ENCODE measurements at regions of chr5 and their contacts with region 1.

Region 1: DNA sequence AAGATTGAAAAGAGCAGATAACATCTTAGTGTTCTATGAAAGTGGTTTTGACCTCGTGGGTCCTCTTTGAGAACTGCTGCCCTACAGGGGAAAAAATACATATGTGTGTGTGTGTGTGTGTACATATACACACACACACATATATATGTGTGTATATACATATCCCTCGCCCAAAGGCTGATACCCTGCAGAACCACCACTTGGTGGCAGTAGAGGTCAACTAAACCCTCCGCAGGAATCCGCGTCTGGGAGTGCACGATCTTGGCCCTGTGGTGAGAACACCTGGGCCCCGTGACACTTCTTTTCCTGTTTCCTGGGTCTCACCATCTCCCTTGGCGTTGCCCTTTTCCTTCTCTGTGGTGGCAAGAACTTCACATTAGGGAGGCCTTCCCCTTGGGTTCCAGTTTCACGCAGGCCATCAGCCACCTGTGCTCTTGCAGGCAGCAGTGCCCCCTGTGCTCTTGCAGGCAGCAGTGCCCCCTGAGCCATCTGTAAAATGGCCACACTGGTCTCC is 8.2 kb downstream of the IL9 start:
- DNase-seq: peak; percentile 80 to 84
- H3K4me3 ChIP-seq: no peak overlapping the region
- H3K4me3 Mint-ChIP-seq: no peak overlapping the region
- H3K27ac Mint-ChIP-seq: no peak overlapping the region
- H3K4me1 ChIP-seq: peaks cover 11% of the 10 kb centered on the region; the same call in 1 of the 2 replicates
- H3K4me1 Mint-ChIP-seq: peaks cover 8% of the 10 kb centered on the region
- H3K27me3 ChIP-seq: no peaks in the 10 kb centered on the region
- H3K27me3 Mint-ChIP-seq: no peaks in the 10 kb centered on the region
- CTCF ChIP-seq: peak; percentile 86 to 87

Region 2: DNA sequence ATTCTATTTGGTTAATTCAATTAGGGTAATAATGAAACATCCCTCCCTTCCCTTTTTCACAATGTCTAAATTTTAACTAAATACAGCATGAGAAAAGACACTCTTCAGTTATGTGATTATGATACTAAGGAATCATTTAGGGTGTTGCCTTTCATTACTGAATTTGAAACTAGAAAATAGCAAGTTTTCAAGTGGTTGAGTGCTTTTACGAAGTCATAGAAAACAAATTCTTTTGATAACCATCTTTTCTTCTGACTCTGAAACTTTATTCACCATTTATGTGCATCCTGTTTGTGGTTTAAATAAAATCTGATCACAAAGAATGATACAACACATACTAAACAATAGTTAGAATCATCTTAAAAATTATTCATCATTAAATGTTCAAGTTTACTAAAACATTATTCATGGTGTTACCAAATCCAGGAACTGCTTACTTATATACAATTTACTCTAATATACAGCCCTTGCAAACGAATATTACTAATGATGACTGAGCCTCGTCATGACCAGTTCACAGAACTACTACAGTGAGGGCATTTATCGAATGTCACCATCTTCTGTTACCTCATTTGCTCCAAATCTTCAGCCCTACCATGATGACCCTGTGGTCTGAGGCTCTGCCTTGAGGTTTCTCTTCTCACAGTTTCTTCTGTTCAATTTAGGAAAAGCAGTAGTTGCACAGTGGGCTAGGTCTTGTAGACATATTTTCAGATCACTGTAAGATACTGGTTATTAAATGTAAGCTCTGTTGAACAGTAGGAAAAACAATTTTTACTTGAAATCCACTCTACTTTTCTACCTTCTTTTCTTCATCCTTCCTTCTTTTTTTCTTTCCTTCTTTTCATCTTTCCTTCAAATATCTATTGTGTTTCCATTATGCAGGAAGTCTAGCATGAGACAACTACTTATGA is 26.6 kb after region 1 on chr5:
- CTCF ChIA-PET with region 1: no interaction called
- POLR2A ChIA-PET with region 1: no interaction called
- intact Hi-C with region 1: no loop called
- DNase-seq: no peak
- H3K4me3 ChIP-seq: no peak overlapping the region
- H3K4me3 Mint-ChIP-seq: no peak overlapping the region
- H3K27ac Mint-ChIP-seq: no peak overlapping the region
- H3K4me1 ChIP-seq: peaks cover 12% of the 10 kb centered on the region
- H3K4me1 Mint-ChIP-seq: peaks cover 16% of the 10 kb centered on the region
- H3K27me3 ChIP-seq: no peaks in the 10 kb centered on the region
- H3K27me3 Mint-ChIP-seq: peaks cover 22% of the 10 kb centered on the region
- CTCF ChIP-seq: no peak

Region 3: GRCh38 chr5:135944967-135945560 is 57.7 kb after region 1 on chr5:
- CTCF ChIA-PET with region 1: interaction called, 3 read pairs
- POLR2A ChIA-PET with region 1: no interaction called
- intact Hi-C with region 1: loop called (anchors 1 kb)
- DNase-seq: peak; percentile 60 to 76
- H3K4me3 ChIP-seq: no peak overlapping the region
- H3K4me3 Mint-ChIP-seq: no peak overlapping the region
- H3K27ac Mint-ChIP-seq: no peak overlapping the region
- H3K4me1 ChIP-seq: peaks cover under 1% of the 10 kb centered on the region; the same call in 1 of the 2 replicates
- H3K4me1 Mint-ChIP-seq: no peaks in the 10 kb centered on the region
- H3K27me3 ChIP-seq: no peaks in the 10 kb centered on the region
- H3K27me3 Mint-ChIP-seq: no peaks in the 10 kb centered on the region
- CTCF ChIP-seq: peak; percentile 79 to 80

Region 4: GRCh38 chr5:135989686-135990085 is 102.3 kb after region 1 on chr5:
- CTCF ChIA-PET with region 1: interaction called, 7 read pairs
- POLR2A ChIA-PET with region 1: no interaction called
- intact Hi-C with region 1: loop called (anchors 1 kb)
- DNase-seq: no peak
- H3K4me3 ChIP-seq: no peak overlapping the region
- H3K4me3 Mint-ChIP-seq: no peak overlapping the region
- H3K27ac Mint-ChIP-seq: no peak overlapping the region
- H3K4me1 ChIP-seq: no peaks in the 10 kb centered on the region
- H3K4me1 Mint-ChIP-seq: no peaks in the 10 kb centered on the region
- H3K27me3 ChIP-seq: no peaks in the 10 kb centered on the region
- H3K27me3 Mint-ChIP-seq: no peaks in the 10 kb centered on the region
- CTCF ChIP-seq: peak in 1 of 2 experiments; percentile 26

Region 5: DNA sequence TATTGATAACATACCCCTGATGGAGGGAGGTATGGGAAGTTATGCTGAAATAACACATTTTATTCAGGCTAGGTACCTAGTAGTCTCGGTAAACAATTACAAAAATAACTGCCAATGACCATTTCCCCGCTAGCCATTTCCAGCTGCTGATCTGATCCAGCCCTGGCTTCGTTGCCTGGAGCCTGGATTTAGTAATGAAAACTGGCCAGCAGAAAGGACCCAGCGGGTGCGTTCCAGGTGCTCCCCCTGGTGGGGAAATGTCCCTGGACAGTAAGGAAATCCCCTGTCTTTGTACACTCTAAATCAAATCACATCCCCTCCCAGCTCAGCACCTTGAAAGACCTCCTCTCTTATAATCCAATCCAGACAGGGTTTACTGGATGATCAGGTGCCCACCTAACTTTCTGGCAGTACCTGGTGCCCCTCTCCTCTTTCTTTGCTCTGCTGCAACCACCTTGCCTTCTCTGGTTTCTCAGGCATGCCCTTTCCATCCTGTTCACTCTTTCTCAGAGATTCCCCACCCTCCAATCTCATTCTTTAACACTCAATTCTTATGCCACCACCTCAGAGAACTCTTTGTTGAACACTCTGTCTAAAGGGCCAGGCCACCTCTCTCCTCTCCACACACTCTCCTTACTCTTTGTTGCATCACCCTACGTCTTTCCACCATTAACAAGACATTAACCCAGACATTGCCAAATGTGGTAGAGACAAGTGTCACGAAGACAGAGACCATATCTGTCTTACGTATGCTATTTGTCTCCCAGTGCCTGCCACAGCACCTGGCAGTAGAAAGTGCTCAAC is 195.2 kb after region 1 on chr5:
- CTCF ChIA-PET with region 1: no interaction called
- POLR2A ChIA-PET with region 1: no interaction called
- intact Hi-C with region 1: loop called (anchors 1 kb)
- DNase-seq: peak; percentile 78 to 85
- H3K4me3 ChIP-seq: no peak overlapping the region
- H3K4me3 Mint-ChIP-seq: no peak overlapping the region
- H3K27ac Mint-ChIP-seq: no peak overlapping the region
- H3K4me1 ChIP-seq: peaks cover 11% of the 10 kb centered on the region
- H3K4me1 Mint-ChIP-seq: no peaks in the 10 kb centered on the region
- H3K27me3 ChIP-seq: no peaks in the 10 kb centered on the region
- H3K27me3 Mint-ChIP-seq: no peaks in the 10 kb centered on the region
- CTCF ChIP-seq: peak; percentile 88

Region 6: GRCh38 chr5:136212252-136212721 is 324.9 kb after region 1 on chr5:
- CTCF ChIA-PET with region 1: interaction called, 3 read pairs
- POLR2A ChIA-PET with region 1: no interaction called
- intact Hi-C with region 1: loop called (anchors 1 kb)
- DNase-seq: peak; percentile 68 to 70
- H3K4me3 ChIP-seq: no peak overlapping the region
- H3K4me3 Mint-ChIP-seq: no peak overlapping the region
- H3K27ac Mint-ChIP-seq: no peak overlapping the region
- H3K4me1 ChIP-seq: no peaks in the 10 kb centered on the region
- H3K4me1 Mint-ChIP-seq: no peaks in the 10 kb centered on the region
- H3K27me3 ChIP-seq: no peaks in the 10 kb centered on the region
- H3K27me3 Mint-ChIP-seq: no peaks in the 10 kb centered on the region
- CTCF ChIP-seq: peak; percentile 93 to 94

Region 7: DNA sequence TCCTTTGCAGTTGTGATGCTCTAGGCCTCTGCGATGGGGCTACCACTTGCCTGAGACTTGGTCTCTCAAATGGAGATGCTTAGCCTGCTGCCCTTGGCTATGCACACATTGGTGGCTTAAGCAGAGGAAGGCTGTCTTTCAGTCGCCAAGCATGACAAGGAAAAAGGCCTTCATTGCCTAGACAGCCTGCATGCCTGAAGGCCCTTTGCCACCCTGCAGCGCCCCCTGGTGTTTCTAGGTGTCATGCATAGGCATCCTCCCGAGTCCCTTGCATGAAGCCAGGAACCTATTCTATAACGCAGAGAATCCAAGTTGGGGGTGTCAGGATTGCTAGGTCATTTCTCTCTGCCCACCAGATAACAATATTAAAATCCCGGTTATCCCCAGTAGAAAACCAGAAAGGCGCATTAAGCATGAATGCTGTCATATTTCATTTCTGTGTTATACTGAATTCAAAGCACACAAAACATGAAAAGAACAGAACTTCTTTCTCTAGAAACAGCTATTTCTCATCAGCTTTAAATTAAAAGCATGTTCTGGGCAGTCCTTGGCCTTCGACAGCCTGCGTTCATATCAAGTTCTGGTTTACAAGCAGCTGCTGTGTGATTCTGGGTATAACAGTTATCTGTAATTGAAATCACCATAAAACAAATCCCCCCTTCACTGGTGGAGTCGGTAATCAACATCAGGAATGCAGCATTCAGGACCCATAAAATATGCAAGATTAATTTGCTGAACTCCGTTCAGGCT is 537.6 kb after region 1 on chr5:
- CTCF ChIA-PET with region 1: no interaction called
- POLR2A ChIA-PET with region 1: no interaction called
- intact Hi-C with region 1: loop called (anchors 10 kb)
- DNase-seq: peak; percentile 83 to 89
- H3K4me3 ChIP-seq: no peak overlapping the region
- H3K4me3 Mint-ChIP-seq: no peak overlapping the region
- H3K27ac Mint-ChIP-seq: no peak overlapping the region
- H3K4me1 ChIP-seq: no peaks in the 10 kb centered on the region
- H3K4me1 Mint-ChIP-seq: no peaks in the 10 kb centered on the region
- H3K27me3 ChIP-seq: no peaks in the 10 kb centered on the region
- H3K27me3 Mint-ChIP-seq: peaks cover 24% of the 10 kb centered on the region
- CTCF ChIP-seq: peak; percentile 84 to 93